AG04450 (cell line): ENCODE measurements at regions of chr12 and their contacts with region 1.

Region 1: GRCh38 chr12:42332301-42333285 is 6.6 kb downstream of the PPHLN1 start:
- DNase-seq: no peak
- H3K4me3 ChIP-seq: no peak overlapping the region
- H3K27ac ChIP-seq: no peak overlapping the region
- H3K27me3 ChIP-seq: no peaks in the 10 kb centered on the region
- CTCF ChIP-seq: peak; percentile 65

Region 2: GRCh38 chr12:42129595-42130204 is 202.9 kb before region 1 on chr12:
- CTCF ChIA-PET with region 1: interaction called, 15 read pairs
- POLR2A ChIA-PET with region 1: no interaction called
- DNase-seq: no peak
- H3K4me3 ChIP-seq: no peak overlapping the region
- H3K27ac ChIP-seq: no peak overlapping the region
- H3K27me3 ChIP-seq: no peaks in the 10 kb centered on the region
- CTCF ChIP-seq: peak; percentile 83

Region 3: DNA sequence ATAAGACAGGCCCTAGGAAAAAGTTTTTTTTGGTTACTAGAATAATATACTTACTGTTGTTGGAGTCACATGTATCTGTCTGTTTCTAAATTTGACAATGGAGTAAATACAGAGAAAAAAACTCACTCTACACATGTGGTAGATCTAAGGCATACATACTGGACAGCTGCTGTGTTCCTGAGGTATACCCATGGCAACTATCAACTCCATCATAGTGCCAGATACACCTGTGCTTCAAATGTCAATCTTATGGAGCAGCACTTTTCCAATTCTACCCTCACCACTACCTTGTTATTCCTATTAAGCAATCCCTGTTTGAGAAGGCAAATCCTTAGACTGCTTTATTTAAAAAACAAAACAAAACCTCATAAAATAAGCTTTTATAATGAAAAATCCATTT is 10.0 kb before region 1 on chr12:
- CTCF ChIA-PET with region 1: interaction called, 12 read pairs
- POLR2A ChIA-PET with region 1: no interaction called
- DNase-seq: no peak
- H3K4me3 ChIP-seq: no peak overlapping the region
- H3K27ac ChIP-seq: no peak overlapping the region
- H3K27me3 ChIP-seq: no peaks in the 10 kb centered on the region
- CTCF ChIP-seq: no peak